Activated naive CD4-positive, alpha-beta T cell treated with anti-CD3 and anti-CD28 coated beads, Interleukin-2, amount 10 ng/mL, durations not matched to agents 7 days and 5 days (primary cell): ENCODE measurements at regions of chr6 and their contacts with region 1.

Region 1: DNA sequence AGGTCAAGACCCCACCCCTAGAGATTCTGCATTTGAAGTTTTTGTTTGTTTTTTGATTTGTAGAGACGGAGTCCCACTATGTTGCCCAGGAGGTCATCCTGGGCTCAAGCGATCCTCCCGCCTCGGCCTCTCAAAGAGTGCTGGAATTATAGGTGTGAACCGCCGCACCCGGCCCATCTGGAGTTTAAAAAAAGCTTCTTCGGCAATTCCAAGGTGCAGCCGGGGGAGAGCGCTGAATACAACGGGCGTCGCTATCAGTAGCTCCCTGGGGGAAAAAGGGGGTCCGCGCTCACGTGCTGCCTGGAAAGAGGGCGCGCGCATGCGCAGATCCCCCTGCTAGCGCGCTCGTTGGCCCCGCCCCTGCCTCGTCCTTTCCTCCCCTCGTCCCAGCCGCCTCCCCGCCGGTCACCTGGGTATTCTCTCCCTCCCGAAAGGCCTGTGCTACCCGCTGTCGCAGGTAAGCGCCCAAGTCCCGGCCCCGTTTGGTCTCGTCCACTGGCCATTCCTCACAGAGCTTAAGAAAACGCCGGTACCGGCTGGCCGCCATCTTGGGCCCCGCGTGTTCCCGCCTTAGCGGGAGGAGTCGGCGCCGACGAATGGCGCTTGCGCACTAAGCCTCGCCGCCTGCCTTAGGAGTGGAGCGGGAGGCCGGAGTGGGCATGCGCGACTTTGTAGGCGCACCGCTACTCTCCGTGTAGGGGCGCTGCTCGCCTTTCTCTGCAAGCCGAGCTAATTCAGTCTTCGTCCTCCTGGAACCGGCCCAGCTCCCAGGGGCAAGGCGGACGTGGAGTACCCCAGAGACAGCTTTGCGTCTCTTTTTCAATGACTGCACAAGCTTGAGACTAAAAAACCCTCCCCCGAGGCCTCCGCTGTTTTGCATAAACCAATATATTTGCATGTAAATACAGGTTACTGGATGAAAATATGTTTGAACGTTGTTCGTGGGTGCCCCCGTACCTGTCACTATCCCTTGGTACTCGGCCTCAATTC is at the start of gene UQCC2:
- DNase-seq: peak; percentile 98
- H3K4me3 Mint-ChIP-seq: peak within 1 kb of the TSS; percentile 95
- H3K27ac Mint-ChIP-seq: peak within 1 kb of the TSS; percentile 95
- H3K4me1 Mint-ChIP-seq: peaks cover 49% of the 10 kb centered on the region
- H3K27me3 Mint-ChIP-seq: peaks cover 14% of the 10 kb centered on the region

Region 2: GRCh38 chr6:33700391-33701050 is 10.9 kb before region 1 on chr6:
- CTCF ChIA-PET with region 1: interaction called, 28 read pairs
- DNase-seq: peak; percentile 87
- H3K4me3 Mint-ChIP-seq: no peak overlapping the region
- H3K27ac Mint-ChIP-seq: peak overlapping the region; percentile 35
- H3K4me1 Mint-ChIP-seq: peaks cover 45% of the 10 kb centered on the region
- H3K27me3 Mint-ChIP-seq: no peaks in the 10 kb centered on the region

Region 3: DNA sequence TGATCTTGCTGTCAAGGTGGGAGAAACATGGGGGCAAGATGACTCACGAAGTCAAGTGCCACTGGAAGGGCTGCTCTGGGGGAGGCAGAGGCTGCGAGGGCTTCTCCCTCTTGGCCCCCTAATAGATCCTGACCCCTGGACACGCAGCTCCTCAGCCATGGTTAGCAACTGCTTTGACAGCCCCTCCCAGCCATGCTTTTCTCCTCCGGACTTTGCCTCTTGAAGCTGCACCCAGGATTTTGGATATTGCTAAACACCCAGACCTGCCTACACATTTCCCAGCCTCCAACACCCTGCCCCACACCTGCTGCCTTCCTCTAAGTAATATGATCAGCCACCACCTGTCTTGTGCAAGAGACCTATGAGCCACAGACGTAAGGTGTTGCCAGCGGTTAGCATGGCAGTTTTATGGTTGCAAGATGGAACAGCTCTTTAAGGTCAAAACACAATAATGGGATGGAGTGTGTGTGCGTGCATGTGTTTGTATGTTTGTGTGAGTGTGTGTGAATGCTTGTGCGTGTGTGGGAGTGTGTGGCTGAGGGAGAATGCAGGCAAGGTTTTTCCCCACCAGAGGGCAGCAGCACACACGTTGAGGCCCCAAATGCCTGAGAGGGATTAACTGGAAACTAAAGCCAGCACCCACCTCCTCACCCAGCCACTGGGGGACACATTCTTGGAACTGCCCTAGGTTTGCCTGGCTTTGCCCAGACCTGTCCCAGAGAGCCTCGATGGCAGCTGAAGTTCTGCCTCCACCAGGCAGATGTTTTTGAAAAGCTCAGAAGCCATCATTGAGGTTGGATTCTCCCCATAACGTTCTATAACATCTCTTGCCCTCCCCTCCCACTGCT is 32.8 kb after region 1 on chr6:
- CTCF ChIA-PET with region 1: interaction called, 27 read pairs
- DNase-seq: peak; percentile 80
- H3K4me3 Mint-ChIP-seq: no peak overlapping the region
- H3K27ac Mint-ChIP-seq: no peak overlapping the region
- H3K4me1 Mint-ChIP-seq: no peaks in the 10 kb centered on the region
- H3K27me3 Mint-ChIP-seq: peaks cover 66% of the 10 kb centered on the region

Region 4: DNA sequence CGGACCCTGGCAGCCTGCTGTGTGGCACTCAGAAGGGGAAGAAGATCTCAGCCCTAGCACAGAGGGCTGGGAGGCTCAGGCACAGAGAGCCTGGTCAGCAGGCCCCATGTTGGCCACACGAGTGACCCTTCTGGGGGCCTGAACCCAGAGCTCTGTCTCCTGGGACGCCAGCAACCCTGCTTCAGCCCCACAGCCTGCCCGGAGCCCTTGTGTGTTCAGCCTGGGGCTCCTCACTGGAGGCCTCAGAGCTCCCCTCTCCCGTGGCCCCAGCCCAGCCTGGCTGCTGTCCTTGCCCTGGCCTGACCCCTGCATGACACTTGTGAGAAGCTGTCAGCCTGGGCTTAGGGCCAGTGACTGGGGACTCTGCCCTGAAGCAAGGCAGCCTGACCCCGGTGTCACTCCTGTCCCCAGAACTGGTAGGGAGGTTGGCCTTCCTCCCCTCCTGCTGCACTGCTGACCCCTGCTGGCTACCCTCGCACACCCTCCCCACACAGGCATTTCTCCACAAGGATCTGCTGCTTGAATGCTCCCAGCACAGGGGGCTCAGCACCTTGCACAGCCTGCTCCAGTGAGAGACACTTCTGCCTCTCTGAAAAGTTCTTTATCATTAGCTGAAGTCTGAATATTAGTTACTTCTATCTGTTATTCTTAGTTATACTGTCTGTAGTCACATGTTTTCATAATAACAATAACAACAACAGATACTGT is 50.6 kb after region 1 on chr6:
- CTCF ChIA-PET with region 1: interaction called, 10 read pairs
- DNase-seq: peak; percentile 75
- H3K4me3 Mint-ChIP-seq: no peak overlapping the region
- H3K27ac Mint-ChIP-seq: no peak overlapping the region
- H3K4me1 Mint-ChIP-seq: no peaks in the 10 kb centered on the region
- H3K27me3 Mint-ChIP-seq: peaks cover 48% of the 10 kb centered on the region